ENCODE measurements at regions of chr11 and their contacts with region 1.

Region 1: GRCh38 chr11:132045107-132045506 is 674.7 kb downstream of the NTM start:
- DNase-seq: no peak
- ATAC-seq: no peak

Region 2: GRCh38 chr11:133947321-133947756 is 1902.2 kb after region 1 on chr11:
- intact Hi-C with region 1: loop called (anchors 5 kb)
- DNase-seq: no peak
- ATAC-seq: peak; percentile 38

Measured in sciatic nerve (tissue), 2 donors.